ENCODE measurements at regions of chr1 and their contacts with region 1.

Region 1: GRCh38 chr1:28172713-28173150 is 3.8 kb downstream of the PTAFR start:
- DNase-seq: peak; percentile 85
- H3K4me3 Mint-ChIP-seq: peak overlapping the region; percentile 47
- H3K27ac Mint-ChIP-seq: peak overlapping the region; percentile 15
- H3K4me1 Mint-ChIP-seq: peaks cover 48% of the 10 kb centered on the region
- H3K27me3 Mint-ChIP-seq: peaks cover 54% of the 10 kb centered on the region

Region 2: GRCh38 chr1:28115267-28115666 is 57.5 kb before region 1 on chr1:
- intact Hi-C with region 1: loop called (anchors 1 kb)
- DNase-seq: peak; percentile 83
- H3K4me3 Mint-ChIP-seq: peak overlapping the region; percentile 40
- H3K27ac Mint-ChIP-seq: peak overlapping the region; percentile 49
- H3K4me1 Mint-ChIP-seq: peaks cover 14% of the 10 kb centered on the region
- H3K27me3 Mint-ChIP-seq: peaks cover 23% of the 10 kb centered on the region

Region 3: GRCh38 chr1:28144203-28145135 is 28.3 kb before region 1 on chr1:
- intact Hi-C with region 1: loop called (anchors 1 kb)
- DNase-seq: peak; percentile 70
- H3K4me3 Mint-ChIP-seq: no peak overlapping the region
- H3K27ac Mint-ChIP-seq: no peak overlapping the region
- H3K4me1 Mint-ChIP-seq: peaks cover 9% of the 10 kb centered on the region
- H3K27me3 Mint-ChIP-seq: peaks cover 55% of the 10 kb centered on the region

Measured in activated CD4-positive, alpha-beta T cell treated with anti-CD3 and anti-CD28 coated beads, Interleukin-2, amount 10 ng/mL, durations not matched to agents 24 days and 14 days (primary cell).